ENCODE measurements at regions of chr10 and their contacts with region 1.

Region 1: GRCh38 chr10:44974628-44975431 is 3.8 kb downstream of the DEPP1 start:
- DNase-seq: peak; percentile 79
- H3K4me3 ChIP-seq: peak overlapping the region; percentile 8 to 59 (median 34)
- H3K27ac ChIP-seq: peak overlapping the region; percentile 87 to 95 (median 87)
- H3K4me1 ChIP-seq: peaks cover 11 to 51% (median 47%) of the 10 kb centered on the region in 4 donors
- H3K27me3 ChIP-seq: no peaks in the 10 kb centered on the region
- CTCF ChIP-seq: peak; percentile 83 to 98 (median 96)
- EP300 ChIP-seq: no peak
- POLR2A ChIP-seq: peak; percentile 56

Region 2: GRCh38 chr10:44932517-44933450 is 42.0 kb before region 1 on chr10:
- in situ Hi-C with region 1: loop called in 1 of 4 experiments (anchors 5 kb)
- intact Hi-C with region 1: loop called (anchors 2 kb)
- DNase-seq: peak; percentile 93
- H3K4me3 ChIP-seq: no peak overlapping the region
- H3K27ac ChIP-seq: no peak overlapping the region
- H3K4me1 ChIP-seq: peaks cover 4 to 12% (median 6%) of the 10 kb centered on the region in 4 donors
- H3K27me3 ChIP-seq: no peaks in the 10 kb centered on the region
- CTCF ChIP-seq: peak; percentile 93 to 97 (median 97)
- EP300 ChIP-seq: no peak
- POLR2A ChIP-seq: no peak

Region 3: DNA sequence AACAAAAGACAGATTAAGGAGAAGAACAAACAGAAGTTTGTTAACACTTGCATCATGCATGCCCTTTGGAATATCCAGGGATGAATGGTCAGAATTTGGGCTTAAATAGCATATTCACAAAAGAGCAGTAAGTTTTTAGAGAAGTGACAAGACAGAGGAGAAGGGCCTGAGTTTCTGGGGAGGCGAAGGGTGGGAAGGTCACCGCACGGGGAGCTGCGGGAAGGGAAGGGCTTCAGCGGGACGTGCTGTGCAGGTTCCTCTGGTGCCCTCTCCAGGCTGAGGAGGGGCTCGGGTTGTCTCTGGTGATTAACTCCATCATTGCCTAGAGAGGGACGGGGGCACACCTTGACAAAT is 15.4 kb after region 1 on chr10:
- in situ Hi-C with region 1: no loop called
- intact Hi-C with region 1: no loop called
- DNase-seq: no peak
- H3K4me3 ChIP-seq: no peak overlapping the region
- H3K27ac ChIP-seq: peak overlapping the region in 1 of 4 donors; percentile 27
- H3K4me1 ChIP-seq: peaks cover 0 to 14% (median 4%) of the 10 kb centered on the region in 4 donors
- H3K27me3 ChIP-seq: no peaks in the 10 kb centered on the region
- CTCF ChIP-seq: no peak
- EP300 ChIP-seq: no peak
- POLR2A ChIP-seq: no peak

Measured in transverse colon (tissue), 4 donors.